PC-9 (cell line): ENCODE measurements at regions of chr15 and their contacts with region 1.

Region 1: GRCh38 chr15:50765195-50765973 is at the start of gene SPPL2A:
- DNase-seq: peak; percentile 43 to 77
- H3K4me3 ChIP-seq: peak within 1 kb of the TSS; percentile 82
- H3K27ac ChIP-seq: peak within 1 kb of the TSS; percentile 46
- H3K4me1 ChIP-seq: peaks cover 7% of the 10 kb centered on the region
- H3K27me3 ChIP-seq: no peaks in the 10 kb centered on the region
- CTCF ChIP-seq: no peak
- total RNA-seq, gene SPPL2A: 70.6 and 75.4 TPM in 2 replicates

Region 2: DNA sequence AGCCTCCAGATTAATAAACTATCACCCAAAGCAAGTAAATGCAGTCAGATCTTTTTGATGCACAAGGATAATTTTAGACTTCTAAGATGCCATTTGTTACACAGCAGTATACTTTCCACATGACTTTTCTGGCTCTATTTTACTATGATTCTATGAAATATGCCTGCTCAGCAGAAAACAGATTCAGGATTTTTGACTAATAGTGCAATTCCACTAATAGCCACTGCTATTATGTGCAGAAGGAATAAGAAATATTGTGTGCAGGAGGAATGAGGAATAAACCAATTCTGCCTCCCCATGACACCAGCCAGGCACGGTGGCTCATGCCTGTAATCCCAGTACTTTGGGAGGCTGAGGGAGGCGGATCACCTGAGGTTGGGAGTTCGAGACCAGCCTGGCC is 11.7 kb after region 1 on chr15:
- CTCF ChIA-PET with region 1: no interaction called
- POLR2A ChIA-PET with region 1: interaction called, 28 read pairs
- intact Hi-C with region 1: no loop called
- DNase-seq: no peak
- H3K4me3 ChIP-seq: no peak overlapping the region
- H3K27ac ChIP-seq: no peak overlapping the region
- H3K4me1 ChIP-seq: no peaks in the 10 kb centered on the region
- H3K27me3 ChIP-seq: no peaks in the 10 kb centered on the region
- CTCF ChIP-seq: no peak; the same call in 1 of the 2 replicates

Region 3: GRCh38 chr15:50813877-50814276 is 48.5 kb after region 1 on chr15:
- CTCF ChIA-PET with region 1: interaction called, 22 read pairs
- POLR2A ChIA-PET with region 1: no interaction called
- intact Hi-C with region 1: loop called (anchors 5 kb)
- DNase-seq: no peak
- H3K4me3 ChIP-seq: no peak overlapping the region
- H3K27ac ChIP-seq: no peak overlapping the region
- H3K4me1 ChIP-seq: peaks cover 15% of the 10 kb centered on the region
- H3K27me3 ChIP-seq: no peaks in the 10 kb centered on the region
- CTCF ChIP-seq: no peak

Region 4: GRCh38 chr15:50819344-50819743 is 54.0 kb after region 1 on chr15:
- CTCF ChIA-PET with region 1: interaction called, 22 read pairs
- POLR2A ChIA-PET with region 1: no interaction called
- intact Hi-C with region 1: loop called (anchors 5 kb)
- DNase-seq: no peak
- H3K4me3 ChIP-seq: no peak overlapping the region
- H3K27ac ChIP-seq: no peak overlapping the region
- H3K4me1 ChIP-seq: peaks cover 28% of the 10 kb centered on the region
- H3K27me3 ChIP-seq: no peaks in the 10 kb centered on the region
- CTCF ChIP-seq: no peak

Region 5: GRCh38 chr15:50876989-50877360 is 111.6 kb after region 1 on chr15:
- CTCF ChIA-PET with region 1: no interaction called
- POLR2A ChIA-PET with region 1: interaction called, 9 read pairs
- intact Hi-C with region 1: loop called (anchors 2 kb)
- DNase-seq: peak; percentile 74 to 84
- H3K4me3 ChIP-seq: peak overlapping the region; percentile 48; the same call in 1 of the 2 replicates
- H3K27ac ChIP-seq: peak overlapping the region; percentile 36
- H3K4me1 ChIP-seq: peaks cover 19% of the 10 kb centered on the region
- H3K27me3 ChIP-seq: no peaks in the 10 kb centered on the region
- CTCF ChIP-seq: peak; percentile 96

Region 6: GRCh38 chr15:50883903-50884302 is 118.5 kb after region 1 on chr15:
- CTCF ChIA-PET with region 1: no interaction called
- POLR2A ChIA-PET with region 1: interaction called, 9 read pairs
- intact Hi-C with region 1: loop called (anchors 2 kb)
- DNase-seq: peak in 1 of 2 experiments; percentile 23
- H3K4me3 ChIP-seq: no peak overlapping the region
- H3K27ac ChIP-seq: peak overlapping the region; percentile 68
- H3K4me1 ChIP-seq: peaks cover 30% of the 10 kb centered on the region
- H3K27me3 ChIP-seq: no peaks in the 10 kb centered on the region
- CTCF ChIP-seq: no peak